ENCODE measurements at regions of chr2 and their contacts with region 1.

Region 1: DNA sequence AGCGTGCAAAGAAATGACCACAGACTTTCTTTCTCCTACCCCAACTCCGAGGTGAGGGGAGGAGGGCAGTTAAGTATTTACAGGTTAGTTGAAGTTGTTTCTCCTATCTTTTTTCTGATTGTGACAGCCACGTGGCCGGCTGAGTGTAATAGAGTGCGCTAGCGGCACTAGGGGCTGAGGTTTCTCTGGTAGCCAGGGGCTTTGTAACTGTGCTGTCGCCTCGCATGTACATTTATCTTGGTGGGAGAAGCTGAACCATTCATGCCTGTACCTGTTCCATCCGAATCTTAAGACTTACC is 214.1 kb upstream of the STON1 start:
- DNase-seq: peak; percentile 31
- H3K4me3 Mint-ChIP-seq: peak overlapping the region; percentile 93
- H3K27ac Mint-ChIP-seq: peak overlapping the region; percentile 95
- H3K4me1 Mint-ChIP-seq: peaks cover 44% of the 10 kb centered on the region
- H3K27me3 Mint-ChIP-seq: no peaks in the 10 kb centered on the region

Region 2: DNA sequence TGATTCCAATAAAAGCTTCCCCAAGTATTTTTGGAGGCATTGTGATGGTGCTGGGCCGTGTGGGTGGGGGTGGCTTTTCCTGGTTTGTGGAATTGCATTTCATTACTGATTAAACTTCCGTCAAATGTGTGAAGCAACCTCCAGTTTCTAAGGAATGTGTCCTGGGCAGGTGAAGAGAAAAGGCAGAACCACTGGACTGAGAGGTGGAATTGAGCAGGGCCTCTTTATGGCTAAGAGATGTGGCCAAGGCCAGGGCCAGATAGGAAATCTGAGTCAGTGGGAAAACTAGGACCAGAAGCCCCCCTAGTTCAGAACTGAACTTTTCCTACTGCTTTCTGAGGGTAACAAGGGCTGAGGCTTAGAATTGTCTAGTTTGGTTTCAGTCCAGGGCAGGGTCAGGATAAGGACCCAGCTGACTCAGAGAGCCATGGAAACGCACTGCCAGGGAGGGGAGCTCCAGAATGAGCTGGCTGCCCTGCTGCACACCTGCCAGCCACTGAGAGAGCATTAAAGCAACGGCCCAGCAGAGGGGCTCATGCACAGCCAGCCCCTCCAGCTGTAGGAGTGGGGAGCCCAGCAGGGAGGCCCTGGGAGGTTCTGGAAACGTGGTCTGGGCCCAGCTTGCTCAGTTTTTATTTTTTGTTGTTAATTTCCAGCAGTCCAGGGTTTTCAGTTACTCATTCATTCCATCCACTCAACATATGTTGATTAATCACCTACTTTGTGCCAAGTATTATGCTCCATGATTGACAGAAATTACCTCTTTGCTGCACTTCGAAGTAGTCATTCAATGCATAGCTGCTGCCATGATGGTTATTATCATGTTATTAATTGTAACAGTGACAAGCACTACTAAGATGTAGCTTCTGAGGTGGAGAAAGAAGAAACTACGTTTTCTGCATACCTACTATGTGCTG is 756.8 kb before region 1 on chr2:
- intact Hi-C with region 1: no loop called
- DNase-seq: no peak
- H3K4me3 Mint-ChIP-seq: no peak overlapping the region
- H3K27ac Mint-ChIP-seq: no peak overlapping the region
- H3K4me1 Mint-ChIP-seq: no peaks in the 10 kb centered on the region
- H3K27me3 Mint-ChIP-seq: peaks cover 3% of the 10 kb centered on the region

Region 3: DNA sequence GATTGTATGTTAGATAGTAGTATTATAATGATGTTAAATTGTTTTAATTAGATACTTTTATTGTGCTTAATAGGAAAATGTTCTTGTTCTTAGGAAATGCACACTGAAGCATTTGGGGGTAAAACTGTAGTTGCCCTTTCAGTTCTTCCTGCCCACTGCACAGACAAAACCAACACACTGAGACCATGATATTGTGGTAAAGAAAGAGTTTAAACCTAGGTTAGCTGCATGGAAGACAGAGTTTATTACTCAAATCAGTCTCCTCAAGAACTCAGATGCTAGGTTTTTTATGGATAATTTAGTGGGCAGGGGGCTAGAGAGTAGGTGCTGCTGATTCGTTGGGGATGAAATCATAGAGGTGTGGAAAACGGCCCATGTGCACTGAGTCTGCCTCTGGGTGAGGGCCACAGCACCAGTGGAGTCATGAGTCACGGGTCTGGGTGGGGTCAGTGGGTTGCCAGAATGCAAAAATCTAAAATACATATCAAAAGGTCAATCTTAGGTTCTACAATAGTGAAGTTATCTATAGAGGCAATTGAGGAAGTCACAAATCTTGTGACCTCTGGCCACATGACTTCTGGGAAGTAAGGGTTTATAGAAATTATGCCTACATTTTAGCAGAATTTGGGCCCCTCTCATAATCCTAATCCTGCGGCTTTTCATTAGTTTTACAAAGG is 126.2 kb before region 1 on chr2:
- intact Hi-C with region 1: no loop called
- DNase-seq: no peak
- H3K4me3 Mint-ChIP-seq: no peak overlapping the region
- H3K27ac Mint-ChIP-seq: no peak overlapping the region
- H3K4me1 Mint-ChIP-seq: no peaks in the 10 kb centered on the region
- H3K27me3 Mint-ChIP-seq: peaks cover 6% of the 10 kb centered on the region

Region 4: DNA sequence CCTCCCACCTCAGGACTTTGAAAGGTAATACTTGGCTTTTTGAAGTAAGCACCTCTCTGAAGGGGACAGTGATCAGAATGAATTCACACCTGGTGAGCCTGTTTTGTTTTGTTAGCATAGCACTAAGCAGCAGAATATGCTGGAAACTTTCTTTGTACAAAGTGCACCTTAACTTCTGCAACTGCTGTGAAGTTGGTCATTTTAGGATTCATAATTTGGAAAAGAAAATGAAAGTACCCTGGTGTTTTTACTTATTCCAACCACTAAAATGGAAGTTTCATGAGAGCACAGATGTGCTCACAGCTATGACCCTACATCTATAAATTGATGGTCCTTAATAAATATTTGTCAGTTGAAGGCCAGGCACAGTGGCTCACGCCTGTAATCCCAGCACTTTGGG is 43.6 kb before region 1 on chr2:
- intact Hi-C with region 1: loop called (anchors 1 kb)
- DNase-seq: no peak
- H3K4me3 Mint-ChIP-seq: no peak overlapping the region
- H3K27ac Mint-ChIP-seq: no peak overlapping the region
- H3K4me1 Mint-ChIP-seq: peaks cover 13% of the 10 kb centered on the region
- H3K27me3 Mint-ChIP-seq: no peaks in the 10 kb centered on the region

Region 5: DNA sequence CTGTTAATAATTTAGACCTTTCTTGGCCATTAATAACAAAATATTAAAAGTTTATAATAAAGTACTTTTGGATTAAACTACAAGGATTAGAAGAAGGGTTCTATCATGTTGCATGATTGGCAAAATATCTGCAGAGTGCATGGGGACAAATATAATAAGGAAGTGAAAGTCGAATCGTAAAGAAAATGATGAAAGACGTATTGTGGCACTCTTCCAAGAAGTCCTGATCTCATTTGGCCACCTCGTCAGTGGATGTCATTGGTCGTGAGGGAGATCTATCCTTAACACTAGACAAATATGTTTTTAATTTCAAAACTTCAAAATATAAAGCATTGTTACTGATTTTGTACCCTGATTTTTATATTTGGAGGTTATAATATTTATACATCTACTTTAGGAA is 16.4 kb after region 1 on chr2:
- intact Hi-C with region 1: loop called (anchors 1 kb)
- DNase-seq: no peak
- H3K4me3 Mint-ChIP-seq: no peak overlapping the region
- H3K27ac Mint-ChIP-seq: no peak overlapping the region
- H3K4me1 Mint-ChIP-seq: peaks cover 33% of the 10 kb centered on the region
- H3K27me3 Mint-ChIP-seq: no peaks in the 10 kb centered on the region

Region 6: GRCh38 chr2:48356701-48357325 is 41.0 kb after region 1 on chr2:
- intact Hi-C with region 1: loop called (anchors 1 kb)
- DNase-seq: peak; percentile 9
- H3K4me3 Mint-ChIP-seq: peak overlapping the region; percentile 61
- H3K27ac Mint-ChIP-seq: peak overlapping the region; percentile 91
- H3K4me1 Mint-ChIP-seq: peaks cover 62% of the 10 kb centered on the region
- H3K27me3 Mint-ChIP-seq: no peaks in the 10 kb centered on the region

Measured in activated T-helper 1 cell treated with anti-CD3 and anti-CD28 coated beads, Interleukin-12 subunit alpha, Interleukin-12 subunit beta, Interleukin-2, Interleukin-4 antibody, amounts not matched to agents 30 ng/mL and 10 ng/mL and 1 ng/mL, durations not matched to agents 14 hours and 24 hours and 36 hours (primary cell).